HEK293 (cell line): ENCODE measurements at regions of chr5 and their contacts with region 1.

Region 1: GRCh38 chr5:151771259-151772028 is at the start of gene G3BP1:
- H3K4me3 ChIP-seq: peak within 1 kb of the TSS; percentile 89
- H3K27ac ChIP-seq: peak within 1 kb of the TSS; percentile 99
- H3K4me1 ChIP-seq: peaks cover 12% of the 10 kb centered on the region
- CTCF ChIP-seq: peak; percentile 69

Region 2: DNA sequence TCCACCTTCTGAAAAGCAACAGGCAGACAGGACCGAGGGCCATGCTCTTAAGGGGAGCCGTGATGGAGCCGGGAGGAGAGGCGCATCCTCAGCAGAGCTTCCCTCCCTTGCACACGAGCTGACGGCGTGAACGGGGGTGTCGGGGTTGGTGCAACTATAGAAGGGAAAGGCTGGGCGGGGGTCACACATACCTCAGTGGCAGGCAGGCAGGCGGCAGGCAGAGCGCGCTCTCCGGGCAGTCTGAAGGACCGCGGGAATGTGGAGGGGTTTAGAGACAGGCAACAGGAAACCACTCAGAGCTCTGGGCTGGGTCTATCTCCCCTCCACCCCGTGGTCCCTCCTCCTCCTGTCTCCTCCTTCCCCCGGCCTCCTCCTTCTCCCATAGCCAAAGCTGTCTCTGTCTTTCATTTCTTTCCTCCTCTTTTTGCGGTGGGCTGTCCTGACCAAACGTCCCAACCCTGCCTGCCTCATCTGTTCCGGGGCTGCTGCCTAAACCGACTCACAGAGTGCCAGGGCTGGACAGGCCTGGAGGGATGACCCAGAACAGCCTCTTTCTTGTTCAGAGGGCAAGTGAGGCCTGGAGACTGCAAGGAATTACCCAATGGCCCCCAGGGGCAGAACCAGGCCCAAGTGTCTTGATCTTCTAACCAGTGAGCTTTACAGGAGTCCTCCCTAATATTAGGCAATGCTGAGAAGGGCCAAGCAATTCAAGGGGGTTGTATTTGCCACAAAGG is 84.6 kb before region 1 on chr5 and contains the start of gene SPARC:
- CTCF ChIA-PET with region 1: interaction called, 3 read pairs
- POLR2A ChIA-PET with region 1: interaction called, 15 read pairs
- H3K4me3 ChIP-seq: peak within 1 kb of the TSS; percentile 67
- H3K27ac ChIP-seq: no peak within 1 kb of the TSS; the same call in 1 of the 2 replicates
- H3K4me1 ChIP-seq: peaks cover 6% of the 10 kb centered on the region; the same call in 1 of the 2 replicates
- CTCF ChIP-seq: no peak

Region 3: GRCh38 chr5:151751091-151751490 is 20.4 kb before region 1 on chr5:
- CTCF ChIA-PET with region 1: no interaction called
- POLR2A ChIA-PET with region 1: interaction called, 58 read pairs
- H3K4me3 ChIP-seq: no peak overlapping the region
- H3K27ac ChIP-seq: no peak overlapping the region
- H3K4me1 ChIP-seq: peaks cover 4% of the 10 kb centered on the region
- CTCF ChIP-seq: no peak

Region 4: GRCh38 chr5:151758430-151759241 is 12.8 kb before region 1 on chr5 and contains the start of gene ATOX1:
- CTCF ChIA-PET with region 1: interaction called, 5 read pairs
- POLR2A ChIA-PET with region 1: interaction called, 58 read pairs
- H3K4me3 ChIP-seq: peak within 1 kb of the TSS; percentile 75
- H3K27ac ChIP-seq: peak within 1 kb of the TSS; percentile 42; the same call in 1 of the 2 replicates
- H3K4me1 ChIP-seq: peaks cover 9% of the 10 kb centered on the region
- CTCF ChIP-seq: peak; percentile 80

Region 5: DNA sequence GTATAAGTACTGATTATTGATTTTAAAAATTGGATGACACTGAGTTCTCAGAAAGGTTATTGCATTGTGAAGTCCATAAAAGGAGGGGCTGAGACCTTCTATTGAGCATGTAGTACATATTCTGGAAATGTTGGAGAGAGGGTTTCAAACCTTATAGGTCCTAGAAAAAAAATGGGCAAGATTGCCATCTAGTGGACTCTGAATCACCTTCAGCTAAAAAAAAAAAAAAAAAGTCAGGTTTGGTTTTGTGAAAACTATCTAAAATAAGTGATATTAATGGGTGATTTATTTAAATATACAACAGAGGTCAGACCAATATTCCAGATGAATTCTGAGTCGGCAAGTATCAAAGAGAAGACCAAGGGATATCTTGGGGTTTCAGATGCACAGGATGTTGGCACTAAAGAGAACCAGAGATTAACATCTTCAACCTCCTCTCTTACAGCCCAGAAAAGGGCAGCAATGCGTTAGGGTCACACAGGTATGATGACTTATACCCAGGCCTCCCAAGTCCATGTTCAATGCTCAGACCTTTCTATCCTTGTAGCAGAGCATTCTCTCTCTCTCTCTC is 743.5 kb after region 1 on chr5:
- CTCF ChIA-PET with region 1: no interaction called
- POLR2A ChIA-PET with region 1: no interaction called
- H3K4me3 ChIP-seq: no peak overlapping the region
- H3K27ac ChIP-seq: no peak overlapping the region
- H3K4me1 ChIP-seq: no peaks in the 10 kb centered on the region
- CTCF ChIP-seq: no peak